PC-3 (cell line): ENCODE measurements at regions of chr10 and their contacts with region 1.

Region 1: GRCh38 chr10:99276848-99277486 is 41.3 kb upstream of the HPSE2 start:
- DNase-seq: peak; percentile 56
- ATAC-seq: no peak
- H3K4me3 ChIP-seq: no peak overlapping the region
- H3K27ac ChIP-seq: no peak overlapping the region
- H3K4me1 ChIP-seq: peaks cover 22% of the 10 kb centered on the region
- H3K27me3 ChIP-seq: no peaks in the 10 kb centered on the region
- CTCF ChIP-seq: peak; percentile 70

Region 2: GRCh38 chr10:98790802-98791201 is 486.2 kb before region 1 on chr10:
- CTCF ChIA-PET with region 1: no interaction called
- POLR2A ChIA-PET with region 1: no interaction called
- intact Hi-C with region 1: loop called (anchors 5 kb)
- DNase-seq: peak; percentile 20
- ATAC-seq: peak; percentile 24; the same call in 1 of the 2 replicates
- H3K4me3 ChIP-seq: no peak overlapping the region
- H3K27ac ChIP-seq: no peak overlapping the region
- H3K4me1 ChIP-seq: no peaks in the 10 kb centered on the region
- H3K27me3 ChIP-seq: peaks cover 14% of the 10 kb centered on the region; the same call in 1 of the 2 replicates
- CTCF ChIP-seq: peak; percentile 53

Region 3: GRCh38 chr10:98858525-98858924 is 418.4 kb before region 1 on chr10:
- CTCF ChIA-PET with region 1: no interaction called
- POLR2A ChIA-PET with region 1: no interaction called
- intact Hi-C with region 1: loop called (anchors 10 kb)
- DNase-seq: peak; percentile 37
- ATAC-seq: no peak
- H3K4me3 ChIP-seq: no peak overlapping the region
- H3K27ac ChIP-seq: no peak overlapping the region
- H3K4me1 ChIP-seq: no peaks in the 10 kb centered on the region
- H3K27me3 ChIP-seq: no peaks in the 10 kb centered on the region
- CTCF ChIP-seq: peak; percentile 53

Region 4: GRCh38 chr10:99207340-99207739 is 69.6 kb before region 1 on chr10:
- CTCF ChIA-PET with region 1: no interaction called
- POLR2A ChIA-PET with region 1: no interaction called
- intact Hi-C with region 1: no loop called
- DNase-seq: no peak
- ATAC-seq: no peak
- H3K4me3 ChIP-seq: no peak overlapping the region
- H3K27ac ChIP-seq: no peak overlapping the region
- H3K4me1 ChIP-seq: no peaks in the 10 kb centered on the region
- H3K27me3 ChIP-seq: no peaks in the 10 kb centered on the region
- CTCF ChIP-seq: no peak

Region 5: GRCh38 chr10:99337311-99337811 is 60.4 kb after region 1 on chr10:
- CTCF ChIA-PET with region 1: no interaction called
- POLR2A ChIA-PET with region 1: no interaction called
- intact Hi-C with region 1: loop called (anchors 2 kb)
- DNase-seq: peak; percentile 51
- ATAC-seq: peak; percentile 54
- H3K4me3 ChIP-seq: no peak overlapping the region; the same call in 1 of the 2 replicates
- H3K27ac ChIP-seq: peak overlapping the region; percentile 85
- H3K4me1 ChIP-seq: peaks cover 40% of the 10 kb centered on the region
- H3K27me3 ChIP-seq: no peaks in the 10 kb centered on the region
- CTCF ChIP-seq: no peak